ENCODE measurements at regions of chr6 and their contacts with region 1.

Region 1: DNA sequence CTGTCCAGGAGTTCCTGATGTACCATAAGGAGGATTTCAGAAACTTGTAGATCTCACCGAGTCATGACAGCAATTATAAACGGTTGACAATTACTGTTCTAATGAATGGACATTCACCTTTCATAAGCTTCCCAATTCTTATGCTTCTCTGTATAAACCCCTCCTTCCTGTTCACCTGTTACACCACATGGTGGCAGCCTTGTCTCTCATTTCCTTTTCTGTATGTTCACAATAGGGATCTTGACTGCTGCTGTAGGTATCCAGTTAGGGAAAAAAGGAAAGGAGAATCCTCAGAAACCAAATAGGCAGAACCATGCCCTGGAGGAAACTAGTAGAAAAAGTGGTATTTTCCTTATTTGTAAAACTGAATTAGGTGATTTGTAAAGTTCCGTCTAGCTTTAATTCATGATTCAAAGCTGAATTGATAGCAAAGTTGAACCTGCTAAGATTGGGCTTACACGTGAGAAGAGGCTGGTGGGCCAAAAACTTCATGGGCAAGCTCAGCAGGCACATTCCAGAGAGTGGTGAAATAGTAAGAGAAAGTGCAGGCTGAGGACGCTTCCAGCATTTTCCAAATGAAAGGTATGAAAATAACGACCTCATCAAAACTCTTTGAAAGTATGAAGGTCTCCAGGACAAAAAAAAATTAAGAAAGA is 29.0 kb upstream of the TBPL1 start:
- DNase-seq: peak; percentile 34
- ATAC-seq: peak; percentile 92 to 95

Region 2: GRCh38 chr6:133854364-133855275 is 69.4 kb before region 1 on chr6:
- intact Hi-C with region 1: no loop called
- DNase-seq: no peak
- ATAC-seq: peak in 1 of 2 donors; percentile 47

Region 3: DNA sequence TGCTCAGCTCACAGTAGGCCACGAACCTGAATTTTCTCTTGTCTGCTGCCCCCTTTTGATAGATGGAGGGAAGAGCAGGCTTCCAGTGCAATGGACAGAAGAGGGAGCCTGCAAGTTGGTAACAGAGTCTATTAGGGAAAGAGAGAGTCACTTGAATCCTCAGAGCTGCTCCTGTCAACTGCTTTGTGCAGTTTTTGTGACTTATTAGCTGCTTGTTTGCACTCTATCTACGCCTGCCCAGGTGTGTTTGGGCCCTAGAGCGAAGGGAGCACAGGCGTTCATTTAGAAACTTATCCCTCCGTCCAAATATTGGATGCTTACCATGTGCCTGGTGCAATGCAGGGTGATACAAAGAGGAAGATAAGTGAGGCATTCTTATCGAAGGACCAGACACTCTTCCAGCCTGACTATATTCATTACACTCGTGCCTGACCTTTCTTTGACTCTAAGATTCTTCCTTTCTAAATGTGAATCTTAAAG is 139.9 kb after region 1 on chr6:
- intact Hi-C with region 1: loop called in 1 of 2 experiments (anchors 10 kb)
- DNase-seq: peak; percentile 34
- ATAC-seq: peak; percentile 90 to 93

Region 4: GRCh38 chr6:134097114-134097707 is 173.1 kb after region 1 on chr6:
- intact Hi-C with region 1: loop called (anchors 2 kb)
- DNase-seq: peak; percentile 63
- ATAC-seq: peak; percentile 44 to 74